Mammary epithelial cell (primary cell): ENCODE measurements at regions of chr4 and their contacts with region 1.

Region 1: DNA sequence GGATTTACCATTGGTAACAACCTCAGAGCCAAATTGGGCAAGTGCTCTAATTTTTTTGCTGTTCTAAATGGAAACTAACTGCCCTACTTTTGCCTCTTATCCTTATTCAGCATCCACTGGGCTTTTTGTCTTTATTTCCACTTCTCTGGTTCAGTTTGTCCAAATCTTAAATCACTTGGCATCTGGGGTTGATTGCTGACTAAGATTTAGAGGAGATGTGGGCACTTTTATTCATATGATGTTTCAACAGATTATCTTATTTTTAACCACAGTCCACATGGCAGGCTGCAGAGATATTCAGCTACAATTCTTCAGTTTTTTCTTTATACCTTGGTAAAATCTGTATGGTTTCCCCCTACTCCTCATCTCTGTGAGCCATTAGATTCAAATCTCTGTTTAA is 1161.4 kb upstream of the PCDH7 start:
- DNase-seq: no peak
- H3K4me3 ChIP-seq: no peak overlapping the region
- H3K27ac ChIP-seq: no peak overlapping the region
- H3K4me1 ChIP-seq: no peaks in the 10 kb centered on the region
- H3K27me3 ChIP-seq: no peaks in the 10 kb centered on the region
- CTCF ChIP-seq: no peak

Region 2: DNA sequence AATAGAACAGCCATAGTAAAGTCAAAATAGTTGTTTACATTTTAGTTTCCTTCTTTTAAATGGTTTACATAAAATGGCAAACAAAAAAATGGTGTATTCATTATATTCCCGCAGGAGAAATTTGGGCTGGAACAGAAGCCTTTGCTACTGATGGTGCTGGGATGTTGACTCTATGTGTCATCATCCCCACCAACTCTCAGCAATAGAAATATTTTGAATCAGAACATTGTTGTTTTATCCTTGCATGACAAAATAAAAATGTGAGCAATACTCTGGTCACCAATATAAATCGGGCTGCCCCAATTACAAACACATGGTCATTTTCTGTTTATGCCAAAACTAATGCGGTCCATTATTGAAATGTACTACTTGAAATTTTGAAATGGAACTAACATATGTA is 29.8 kb after region 1 on chr4:
- CTCF ChIA-PET with region 1: no interaction called
- dilution Hi-C with region 1: loop called (anchors 5 kb)
- in situ Hi-C with region 1: no loop called
- intact Hi-C with region 1: no loop called
- DNase-seq: no peak
- H3K4me3 ChIP-seq: no peak overlapping the region
- H3K27ac ChIP-seq: no peak overlapping the region
- H3K4me1 ChIP-seq: no peaks in the 10 kb centered on the region
- H3K27me3 ChIP-seq: no peaks in the 10 kb centered on the region
- CTCF ChIP-seq: no peak